Activated CD8-positive, alpha-beta memory T cell treated with anti-CD3 and anti-CD28 coated beads, Interleukin-2, amount 10 ng/mL, durations not matched to agents 7 days and 5 days (primary cell): ENCODE measurements at regions of chr12 and their contacts with region 1.

Region 1: GRCh38 chr12:121649819-121650353 is 19.6 kb downstream of the MORN3 start:
- DNase-seq: peak; percentile 60
- ATAC-seq: peak; percentile 75
- H3K4me3 Mint-ChIP-seq: no peak overlapping the region
- H3K27ac Mint-ChIP-seq: peak overlapping the region; percentile 75
- H3K4me1 Mint-ChIP-seq: peaks cover 34% of the 10 kb centered on the region
- H3K27me3 Mint-ChIP-seq: no peaks in the 10 kb centered on the region

Region 2: DNA sequence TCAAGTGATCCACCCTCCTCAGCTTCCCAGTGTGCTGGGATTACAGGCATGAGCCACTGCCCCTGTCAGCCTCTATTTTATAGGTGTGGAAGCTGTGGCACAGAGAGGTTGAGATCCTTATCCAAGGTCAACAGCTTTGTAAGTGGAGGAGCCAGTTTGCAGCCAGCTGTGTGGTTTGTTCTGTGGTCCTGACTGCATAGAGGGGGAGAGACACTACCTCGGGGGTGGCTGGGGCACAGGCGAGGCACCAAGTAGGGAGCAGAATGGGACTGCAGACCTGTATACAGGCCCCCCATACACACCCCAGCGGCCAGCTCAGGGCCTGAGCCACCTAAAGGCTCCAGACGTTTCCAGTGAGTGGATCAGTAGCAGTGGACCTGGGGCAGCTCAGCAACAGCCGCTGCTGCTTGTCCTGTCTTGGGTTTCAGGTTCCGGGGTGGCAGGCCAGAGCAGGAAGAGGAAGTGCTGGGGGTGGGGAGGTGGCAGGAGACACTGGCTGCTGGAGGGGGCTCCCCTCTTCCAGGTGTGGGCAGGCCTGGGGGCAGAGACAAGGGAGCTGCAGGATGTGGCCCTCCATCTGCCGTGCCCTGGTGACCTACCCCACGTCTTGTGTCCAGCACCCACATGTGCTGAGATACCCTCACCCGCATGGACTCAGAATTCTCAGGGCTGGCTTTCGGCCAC is 12.5 kb before region 1 on chr12:
- CTCF ChIA-PET with region 1: interaction called, 21 read pairs
- DNase-seq: peak; percentile 87
- ATAC-seq: peak; percentile 85
- H3K4me3 Mint-ChIP-seq: peak overlapping the region; percentile 44
- H3K27ac Mint-ChIP-seq: peak overlapping the region; percentile 90
- H3K4me1 Mint-ChIP-seq: peaks cover 45% of the 10 kb centered on the region
- H3K27me3 Mint-ChIP-seq: no peaks in the 10 kb centered on the region